PC-3 (cell line): ENCODE measurements at regions of chr7 and their contacts with region 1.

Region 1: DNA sequence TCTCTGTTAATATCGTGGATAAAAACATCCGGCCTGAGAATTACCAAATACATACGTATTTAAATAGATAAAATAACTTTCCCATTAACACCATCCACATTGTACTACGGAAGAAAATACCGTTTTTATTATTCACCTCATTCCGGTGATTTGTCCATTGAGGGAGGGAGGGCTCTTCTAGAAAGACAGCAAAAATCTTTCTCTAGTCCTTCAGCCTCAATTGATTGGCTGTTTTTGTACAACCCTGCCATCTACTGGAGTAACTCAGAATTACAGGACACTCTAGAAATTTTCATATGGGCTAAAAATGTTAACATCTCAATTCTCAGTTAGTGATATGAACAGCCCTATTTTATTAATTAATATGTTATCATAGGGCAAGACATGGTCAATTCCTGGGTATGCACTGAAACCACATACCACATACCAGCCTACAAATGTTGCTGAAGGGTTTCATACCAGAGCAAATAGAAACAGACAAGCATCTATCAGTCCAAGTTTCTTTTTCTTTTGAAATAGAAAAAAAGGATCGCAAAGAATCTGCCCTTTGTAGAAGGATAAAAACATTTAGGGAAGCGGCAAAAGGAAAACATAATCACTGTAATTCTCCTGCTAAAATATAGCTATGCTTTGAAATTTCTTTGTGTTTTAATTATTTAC is 55.8 kb upstream of the CDCA7L start:
- DNase-seq: peak; percentile 80
- ATAC-seq: peak; percentile 85
- H3K4me3 ChIP-seq: peak overlapping the region; percentile 36; the same call in 1 of the 2 replicates
- H3K27ac ChIP-seq: no peak overlapping the region
- H3K4me1 ChIP-seq: no peaks in the 10 kb centered on the region
- H3K27me3 ChIP-seq: peaks cover 32% of the 10 kb centered on the region
- CTCF ChIP-seq: peak; percentile 85

Region 2: DNA sequence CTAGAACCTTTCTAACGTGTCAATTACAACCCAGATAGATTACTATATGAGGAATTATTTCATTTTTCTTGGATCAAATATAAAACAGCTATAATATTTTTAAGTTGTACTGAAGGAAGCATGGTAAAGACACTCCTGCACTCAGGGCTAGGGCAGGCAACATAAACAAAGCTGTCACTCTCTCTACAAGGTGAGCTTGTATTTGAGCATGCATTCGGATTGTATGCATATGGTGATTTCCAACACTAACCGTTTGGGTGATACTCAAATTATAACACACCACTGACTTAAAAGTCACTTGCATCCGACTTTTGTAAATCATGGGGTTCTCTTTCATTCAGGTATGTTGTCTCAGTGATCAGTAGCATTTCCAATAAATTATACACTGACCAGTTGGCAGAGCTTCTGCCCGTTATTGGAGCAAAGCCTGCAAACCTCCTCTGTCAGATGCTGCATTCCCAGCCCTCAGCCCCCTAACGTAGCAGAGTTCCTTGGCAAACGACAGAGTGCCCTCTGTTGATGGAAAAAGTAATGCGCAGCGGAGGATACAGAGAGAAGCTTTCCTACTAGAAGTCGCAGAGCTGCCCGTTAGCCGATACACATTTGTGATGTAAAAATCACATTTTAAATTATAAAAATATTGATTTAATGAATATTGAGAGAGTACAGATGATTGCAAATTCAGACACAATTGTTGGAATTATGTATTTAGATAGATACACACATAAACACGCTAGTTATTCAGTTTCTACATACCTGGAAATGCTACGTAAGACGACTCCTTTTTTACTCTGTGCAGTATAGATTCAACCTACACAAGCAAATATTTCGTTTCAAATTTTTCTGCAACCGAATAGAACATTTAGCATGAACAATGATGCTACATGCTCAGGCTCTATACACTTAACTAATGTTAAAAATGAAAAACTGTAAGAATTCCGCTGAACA is 747.5 kb before region 1 on chr7:
- CTCF ChIA-PET with region 1: no interaction called
- POLR2A ChIA-PET with region 1: no interaction called
- intact Hi-C with region 1: loop called (anchors 1 kb)
- DNase-seq: peak; percentile 79
- ATAC-seq: peak; percentile 84
- H3K4me3 ChIP-seq: no peak overlapping the region
- H3K27ac ChIP-seq: no peak overlapping the region
- H3K4me1 ChIP-seq: no peaks in the 10 kb centered on the region
- H3K27me3 ChIP-seq: peaks cover 66% of the 10 kb centered on the region
- CTCF ChIP-seq: peak; percentile 79

Region 3: GRCh38 chr7:21507626-21508343 is 493.7 kb before region 1 on chr7:
- CTCF ChIA-PET with region 1: no interaction called
- POLR2A ChIA-PET with region 1: no interaction called
- intact Hi-C with region 1: loop called (anchors 1 kb)
- DNase-seq: peak; percentile 74
- ATAC-seq: peak; percentile 93
- H3K4me3 ChIP-seq: no peak overlapping the region
- H3K27ac ChIP-seq: no peak overlapping the region
- H3K4me1 ChIP-seq: peaks cover 5% of the 10 kb centered on the region; the same call in 1 of the 2 replicates
- H3K27me3 ChIP-seq: no peaks in the 10 kb centered on the region
- CTCF ChIP-seq: peak; percentile 86

Region 4: GRCh38 chr7:21690705-21691104 is 310.8 kb before region 1 on chr7:
- CTCF ChIA-PET with region 1: no interaction called
- POLR2A ChIA-PET with region 1: no interaction called
- intact Hi-C with region 1: loop called (anchors 10 kb)
- DNase-seq: peak; percentile 7
- ATAC-seq: no peak
- H3K4me3 ChIP-seq: no peak overlapping the region
- H3K27ac ChIP-seq: no peak overlapping the region
- H3K4me1 ChIP-seq: no peaks in the 10 kb centered on the region
- H3K27me3 ChIP-seq: peaks cover 7% of the 10 kb centered on the region; the same call in 1 of the 2 replicates
- CTCF ChIP-seq: 0 out of 2 replicates have a peak, but pooled peaks have one; percentile 16

Region 5: GRCh38 chr7:21898265-21898930 is 103.1 kb before region 1 on chr7:
- CTCF ChIA-PET with region 1: no interaction called
- POLR2A ChIA-PET with region 1: no interaction called
- intact Hi-C with region 1: no loop called
- DNase-seq: no peak
- ATAC-seq: no peak
- H3K4me3 ChIP-seq: no peak overlapping the region
- H3K27ac ChIP-seq: no peak overlapping the region
- H3K4me1 ChIP-seq: peaks cover 14% of the 10 kb centered on the region
- H3K27me3 ChIP-seq: no peaks in the 10 kb centered on the region
- CTCF ChIP-seq: no peak

Region 6: GRCh38 chr7:21911341-21911875 is 90.1 kb before region 1 on chr7:
- CTCF ChIA-PET with region 1: no interaction called
- POLR2A ChIA-PET with region 1: no interaction called
- intact Hi-C with region 1: loop called (anchors 1 kb)
- DNase-seq: peak; percentile 63
- ATAC-seq: peak; percentile 95
- H3K4me3 ChIP-seq: no peak overlapping the region
- H3K27ac ChIP-seq: peak overlapping the region; percentile 57
- H3K4me1 ChIP-seq: peaks cover 15% of the 10 kb centered on the region; the same call in 1 of the 2 replicates
- H3K27me3 ChIP-seq: no peaks in the 10 kb centered on the region
- CTCF ChIP-seq: no peak

Region 7: DNA sequence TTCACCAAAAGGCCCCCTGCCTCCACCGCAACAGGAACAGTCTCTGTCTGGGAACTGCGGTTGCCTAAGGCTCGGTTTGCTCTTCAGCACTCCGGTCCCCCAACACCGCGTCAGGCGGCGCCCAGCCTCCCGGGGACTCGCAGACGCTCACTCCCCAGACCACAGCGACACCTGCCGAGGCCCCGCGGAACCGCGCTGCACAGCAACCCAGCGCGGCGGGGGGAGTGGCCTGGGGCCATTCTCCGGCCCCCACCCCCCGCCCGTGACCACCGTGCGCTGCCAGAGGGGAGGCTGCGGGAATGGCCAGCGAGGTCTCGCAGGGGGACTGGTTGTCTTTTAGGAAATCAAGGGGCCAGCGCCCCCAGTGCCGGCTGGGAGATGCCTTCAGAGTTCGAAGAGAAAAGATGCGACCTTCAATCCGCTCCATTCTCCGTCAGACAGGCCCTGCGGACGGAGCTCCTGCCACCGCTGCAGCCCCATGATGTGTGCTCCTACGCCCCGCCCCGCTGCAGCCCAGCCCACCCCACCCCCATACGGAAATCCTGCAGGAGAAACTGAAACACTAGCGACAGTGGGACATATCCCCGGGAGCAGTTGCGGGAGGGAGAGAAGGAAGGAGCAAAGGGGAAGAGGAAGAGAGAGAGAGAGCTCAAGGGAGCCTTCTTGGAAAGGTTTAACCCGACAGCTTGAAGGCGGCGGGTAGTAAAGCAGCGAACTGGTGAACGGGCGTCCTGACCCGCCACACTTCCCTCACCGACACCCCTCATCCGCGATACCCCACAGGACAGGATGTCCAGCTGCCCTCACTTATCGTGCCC is 81.6 kb after region 1 on chr7:
- CTCF ChIA-PET with region 1: no interaction called
- POLR2A ChIA-PET with region 1: no interaction called
- intact Hi-C with region 1: loop called (anchors 2 kb)
- DNase-seq: peak; percentile 79
- ATAC-seq: peak; percentile 95
- H3K4me3 ChIP-seq: peak overlapping the region; percentile 77
- H3K27ac ChIP-seq: no peak overlapping the region
- H3K4me1 ChIP-seq: peaks cover 11% of the 10 kb centered on the region; the same call in 1 of the 2 replicates
- H3K27me3 ChIP-seq: peaks cover 12% of the 10 kb centered on the region
- CTCF ChIP-seq: peak; percentile 89

Region 8: DNA sequence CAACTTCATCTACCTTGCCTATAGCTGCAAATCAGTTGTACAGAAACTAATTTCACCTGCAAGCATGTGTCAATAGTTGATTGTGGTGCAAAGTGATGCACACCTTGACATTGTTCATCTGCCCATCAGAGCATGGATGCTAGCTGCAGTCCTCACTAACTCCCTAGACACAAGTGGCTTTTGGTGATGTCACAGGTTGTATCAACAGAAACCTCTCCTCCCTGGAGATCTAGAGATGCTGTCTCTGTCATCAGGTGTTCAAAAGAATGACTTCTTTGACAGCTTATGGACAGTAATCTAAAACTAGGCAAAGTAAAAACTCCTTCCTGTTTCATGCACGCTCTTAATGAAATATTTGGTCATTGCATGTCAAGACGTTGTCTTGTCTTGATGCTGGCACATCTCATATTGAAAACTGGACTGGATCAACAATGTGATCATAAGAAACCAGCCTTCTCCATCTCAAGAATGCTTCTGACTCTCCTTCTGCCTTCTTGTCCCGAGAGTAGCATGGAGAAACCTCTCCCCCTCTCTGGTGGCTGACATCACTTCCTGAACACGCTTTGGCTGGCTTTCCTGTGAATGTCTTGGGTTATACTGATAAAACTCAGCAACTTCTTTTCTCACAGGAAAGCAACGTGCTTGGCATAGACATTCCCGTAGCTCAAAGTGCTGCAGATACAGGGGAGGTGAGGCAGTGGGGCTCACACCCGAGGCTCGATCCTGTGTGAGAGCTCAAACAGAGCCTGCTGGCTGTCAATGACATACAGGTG is 120.4 kb after region 1 on chr7:
- CTCF ChIA-PET with region 1: no interaction called
- POLR2A ChIA-PET with region 1: no interaction called
- intact Hi-C with region 1: no loop called
- DNase-seq: no peak
- ATAC-seq: no peak
- H3K4me3 ChIP-seq: no peak overlapping the region
- H3K27ac ChIP-seq: no peak overlapping the region
- H3K4me1 ChIP-seq: no peaks in the 10 kb centered on the region
- H3K27me3 ChIP-seq: no peaks in the 10 kb centered on the region
- CTCF ChIP-seq: no peak